ENCODE measurements at regions of chr12 and their contacts with region 1.

Region 1: GRCh38 chr12:120528861-120529525 is at the start of gene COQ5:
- DNase-seq: peak; percentile 95
- total RNA-seq, gene COQ5: 31.8 TPM

Region 2: DNA sequence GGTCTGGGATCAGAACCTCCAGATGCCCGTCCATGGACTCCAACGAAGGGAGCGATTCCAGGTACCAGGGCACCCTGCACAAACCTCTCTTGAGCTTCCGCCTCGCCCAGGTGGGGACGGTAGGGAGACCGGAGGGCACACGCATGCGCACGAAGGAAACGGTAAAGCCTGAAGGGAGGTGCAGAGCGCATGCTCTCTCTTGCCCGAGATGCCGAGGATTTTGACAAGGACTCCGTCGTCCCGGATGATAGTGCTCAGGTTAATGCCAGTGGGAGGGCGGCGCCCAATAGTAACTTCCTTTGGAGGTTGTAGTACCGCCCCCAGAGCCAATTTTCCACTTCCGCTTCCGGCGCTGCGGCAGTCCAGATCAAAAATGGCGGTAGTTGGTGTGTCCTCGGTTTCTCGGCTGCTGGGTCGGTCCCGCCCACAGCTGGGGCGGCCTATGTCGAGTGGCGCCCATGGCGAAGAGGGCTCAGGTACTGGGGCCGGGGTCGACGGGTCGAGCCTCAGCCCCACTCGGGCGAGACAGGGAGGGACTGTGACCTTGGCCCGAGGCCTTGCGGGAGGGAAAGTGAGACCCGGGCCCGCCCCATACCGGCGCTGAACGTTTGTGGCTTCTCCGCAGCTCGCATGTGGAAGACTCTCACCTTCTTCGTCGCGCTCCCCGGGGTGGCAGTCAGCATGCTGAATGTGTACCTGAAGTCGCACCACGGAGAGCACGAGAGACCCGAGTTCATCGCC is 91.1 kb before region 1 on chr12 and contains the start of gene COX6A1:
- intact Hi-C with region 1: no loop called
- DNase-seq: peak; percentile 97
- total RNA-seq, gene COX6A1: 232 TPM

Region 3: GRCh38 chr12:120669055-120669840 is 140.3 kb after region 1 on chr12:
- intact Hi-C with region 1: no loop called
- DNase-seq: no peak

Region 4: GRCh38 chr12:121015825-121016766 is 487.1 kb after region 1 on chr12 and contains the start of gene C12orf43:
- intact Hi-C with region 1: loop called (anchors 5 kb)
- DNase-seq: peak; percentile 97
- total RNA-seq, gene C12orf43: 9.1 TPM